AG04449 (cell line): ENCODE measurements at regions of chr1 and their contacts with region 1.

Region 1: DNA sequence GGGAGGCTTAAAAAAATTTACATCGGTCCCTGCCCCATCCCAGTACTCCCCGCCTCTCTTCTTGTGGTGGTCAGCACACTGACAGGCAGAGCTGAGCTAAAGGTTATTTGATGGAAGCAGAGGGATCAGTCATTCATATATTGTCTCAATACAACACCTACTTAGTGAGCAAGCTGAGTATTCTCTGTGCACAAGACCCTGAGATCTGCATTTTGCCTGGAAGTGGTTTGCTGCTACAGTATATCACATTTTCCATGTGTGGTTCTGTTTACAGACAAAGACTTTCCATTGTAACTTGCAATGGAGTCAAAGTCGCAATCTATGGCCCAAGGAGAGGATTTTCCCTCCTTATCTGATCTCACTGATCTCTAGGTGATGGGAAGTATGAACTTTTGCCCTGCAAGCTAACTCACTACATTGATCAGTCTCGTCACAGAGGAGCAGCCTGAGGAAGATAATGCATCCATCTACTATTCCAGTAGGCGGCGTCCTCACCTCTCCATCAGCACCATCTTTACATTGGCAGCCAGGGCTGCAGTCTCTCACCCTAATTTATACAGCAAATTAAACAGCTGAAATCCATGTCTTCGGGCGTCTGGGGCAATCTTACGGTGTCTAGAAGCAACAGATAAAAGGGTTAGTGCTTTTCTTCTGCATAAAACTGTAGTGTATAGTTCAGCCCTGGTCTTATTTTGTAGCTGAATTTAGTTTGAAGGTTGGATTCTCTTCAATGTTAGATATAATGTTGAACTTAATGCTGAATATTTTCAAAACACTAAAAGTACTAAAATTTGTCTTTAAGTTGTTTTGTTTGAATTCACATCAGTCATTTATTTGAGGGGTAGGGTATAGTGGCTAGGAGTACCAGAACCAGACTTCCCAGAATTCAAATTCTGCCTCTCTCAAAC is 3.2 kb upstream of the TRAF5 start:
- DNase-seq: no peak
- H3K4me3 ChIP-seq: no peak overlapping the region
- CTCF ChIP-seq: peak; percentile 83

Region 2: DNA sequence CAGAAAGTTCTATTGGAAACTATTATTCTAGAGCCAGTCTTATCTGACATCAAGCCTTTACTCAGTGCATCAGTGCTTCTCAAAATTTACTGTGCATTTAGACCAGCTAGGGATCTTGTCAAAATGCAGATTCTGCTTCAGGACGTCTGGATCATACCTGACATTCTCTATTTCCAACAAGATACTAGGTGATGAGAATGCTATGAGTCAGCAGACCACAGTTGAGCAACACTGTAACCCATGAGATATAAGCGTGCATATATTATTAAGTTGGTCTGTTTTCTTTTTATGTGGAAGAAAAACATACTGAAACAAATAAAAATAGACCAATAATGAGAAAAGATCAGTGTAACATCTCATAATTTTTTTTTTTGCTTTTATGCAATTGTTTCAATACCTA is 149.0 kb before region 1 on chr1:
- CTCF ChIA-PET with region 1: no interaction called
- POLR2A ChIA-PET with region 1: no interaction called
- DNase-seq: no peak
- H3K4me3 ChIP-seq: no peak overlapping the region
- CTCF ChIP-seq: no peak

Region 3: DNA sequence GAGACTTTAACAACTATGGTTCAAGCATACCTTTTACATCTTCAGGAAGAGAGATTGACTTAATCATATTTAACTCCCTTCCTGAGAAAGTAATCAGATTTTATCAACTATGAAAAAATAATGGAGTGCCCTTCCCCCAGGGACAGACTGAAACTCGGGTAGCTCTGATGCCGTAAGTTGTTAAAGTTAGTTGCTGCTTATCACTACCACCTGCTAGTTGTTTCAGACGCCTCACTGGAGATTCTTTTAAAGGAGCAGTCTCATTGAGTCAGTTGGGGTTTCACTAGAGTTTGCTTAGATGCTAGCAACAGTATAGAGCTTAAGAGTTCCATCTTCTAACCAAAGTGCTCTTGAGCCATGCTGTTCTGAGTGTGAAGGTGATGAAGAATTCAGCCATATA is 13.8 kb before region 1 on chr1:
- CTCF ChIA-PET with region 1: interaction called, 23 read pairs
- POLR2A ChIA-PET with region 1: no interaction called
- DNase-seq: no peak
- H3K4me3 ChIP-seq: no peak overlapping the region
- CTCF ChIP-seq: no peak

Region 4: GRCh38 chr1:211347077-211347844 is 23.9 kb after region 1 on chr1:
- CTCF ChIA-PET with region 1: interaction called, 11 read pairs
- POLR2A ChIA-PET with region 1: no interaction called
- DNase-seq: no peak
- H3K4me3 ChIP-seq: no peak overlapping the region
- CTCF ChIP-seq: no peak

Region 5: GRCh38 chr1:211469938-211470529 is 146.6 kb after region 1 on chr1:
- CTCF ChIA-PET with region 1: interaction called, 39 read pairs
- POLR2A ChIA-PET with region 1: no interaction called
- DNase-seq: no peak
- H3K4me3 ChIP-seq: no peak overlapping the region
- CTCF ChIP-seq: peak; percentile 91

Region 6: GRCh38 chr1:211654838-211655787 is 331.7 kb after region 1 on chr1:
- CTCF ChIA-PET with region 1: interaction called, 28 read pairs
- POLR2A ChIA-PET with region 1: no interaction called
- DNase-seq: no peak
- H3K4me3 ChIP-seq: no peak overlapping the region
- CTCF ChIP-seq: peak; percentile 90